Astrocyte of the cerebellum (primary cell): ENCODE measurements at regions of chr3 and their contacts with region 1.

Region 1: DNA sequence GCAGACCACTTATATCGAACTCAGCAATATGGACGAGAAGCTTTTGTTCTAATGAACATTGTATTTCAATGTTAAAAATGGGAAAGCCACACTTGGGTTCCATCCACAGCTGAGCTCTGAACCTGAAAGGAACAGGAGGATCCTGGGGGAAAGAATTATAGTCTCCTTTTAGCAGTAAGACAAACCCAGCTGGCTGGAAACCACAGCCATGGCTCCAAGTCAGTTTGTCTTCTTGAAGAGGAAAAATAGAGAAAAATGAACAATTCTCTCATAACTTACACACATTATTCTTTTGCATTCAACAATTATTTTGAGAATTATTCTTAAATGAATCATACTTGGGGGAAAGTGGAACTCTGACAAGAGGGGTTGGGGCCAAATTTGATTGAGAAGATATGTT is 149.2 kb upstream of the VEPH1 start:
- DNase-seq: no peak
- H3K4me3 ChIP-seq: no peak overlapping the region
- CTCF ChIP-seq: no peak

Region 2: DNA sequence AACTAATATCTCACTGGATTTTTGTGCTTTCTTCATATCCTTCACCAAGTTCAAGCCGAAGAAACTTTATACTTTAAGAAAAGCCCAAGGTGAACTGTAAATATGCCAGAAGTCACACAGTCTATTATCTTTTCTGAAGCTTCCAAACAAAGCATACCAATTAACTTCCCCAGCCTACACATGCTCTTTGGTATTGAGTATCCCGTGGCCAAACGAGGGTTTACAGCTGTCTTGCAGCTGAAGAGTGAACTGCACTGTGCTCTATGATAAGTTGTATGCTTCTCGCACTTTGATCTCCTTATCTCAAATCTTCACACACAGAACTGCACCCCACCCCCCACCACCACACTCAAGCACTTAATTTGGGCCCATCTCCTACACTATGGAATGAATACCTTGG is 66.4 kb after region 1 on chr3:
- in situ Hi-C with region 1: loop called (anchors 10 kb)
- DNase-seq: no peak
- H3K4me3 ChIP-seq: no peak overlapping the region
- CTCF ChIP-seq: no peak